Right ventricle myocardium inferior (tissue), 1 donor: ENCODE measurements at regions of chr1 and their contacts with region 1.

Region 1: DNA sequence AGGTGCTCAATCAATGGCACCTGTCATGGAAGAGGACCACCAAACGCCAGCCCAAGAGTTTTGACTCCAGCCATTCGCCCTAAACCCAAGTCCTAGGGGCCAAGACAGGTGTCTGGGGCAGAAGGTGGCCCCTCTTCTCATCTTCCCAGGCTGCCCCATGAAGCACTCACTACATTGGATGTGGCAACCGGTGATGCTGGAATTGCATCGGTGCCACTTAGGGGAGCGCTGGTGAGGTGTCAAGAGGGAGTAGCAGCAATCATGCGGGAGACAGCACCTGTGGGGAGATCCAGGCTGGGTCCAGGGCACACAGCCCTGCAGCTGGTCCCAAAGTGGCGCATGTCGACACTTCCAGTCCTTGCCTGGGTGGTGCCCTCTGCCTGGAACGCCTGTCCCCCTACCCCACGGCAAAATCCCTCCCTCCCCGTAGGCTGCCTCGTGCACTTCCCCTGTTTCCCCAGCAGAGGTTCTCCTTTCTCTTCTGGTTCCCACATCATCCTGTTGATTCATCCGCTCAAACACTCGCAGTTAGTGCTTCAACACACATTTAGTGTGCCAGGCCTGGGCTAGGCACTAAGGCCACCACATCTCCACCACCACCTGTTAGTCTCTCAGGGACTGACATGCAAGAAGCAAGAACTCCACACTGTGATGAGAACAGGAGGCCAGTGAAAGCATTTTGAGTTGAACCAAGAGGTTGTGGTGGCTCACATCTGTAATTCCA is 18.5 kb downstream of the PLA2G2D start:
- DNase-seq: no peak
- ATAC-seq: peak; percentile 80

Region 2: DNA sequence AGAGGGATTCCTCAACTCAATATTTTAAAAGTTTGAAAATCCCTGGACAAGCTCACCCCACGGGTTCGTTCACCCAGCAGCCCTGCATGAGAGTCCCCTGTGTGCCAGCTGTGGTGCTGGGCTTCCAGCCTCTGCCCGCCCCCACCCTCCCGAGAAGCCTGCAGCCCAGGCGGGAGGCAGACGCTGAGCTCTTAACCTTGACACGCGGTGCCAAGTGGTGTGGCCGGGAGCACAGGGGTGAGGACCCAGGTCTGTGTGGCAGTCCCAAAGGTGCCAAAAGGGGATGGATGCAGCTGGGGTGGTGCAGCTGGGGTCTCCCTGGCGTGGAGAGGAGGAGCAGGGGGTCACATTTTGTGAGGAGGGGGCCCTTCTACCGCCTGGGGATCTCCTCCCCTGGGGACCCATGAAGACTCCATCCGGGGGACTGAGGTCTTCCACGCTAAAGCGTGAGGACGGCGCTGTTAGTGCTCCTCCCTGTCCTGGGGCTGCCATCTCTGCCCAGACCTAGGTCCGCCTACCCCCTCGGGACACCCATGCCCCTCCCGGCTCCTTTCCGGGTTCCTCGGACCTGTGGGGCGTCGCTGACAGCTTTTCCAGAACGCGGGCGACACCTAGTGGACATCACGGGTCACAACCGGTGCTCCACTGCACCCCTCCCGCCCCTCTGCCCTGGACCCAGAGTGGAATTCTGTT is 51.3 kb after region 1 on chr1:
- intact Hi-C with region 1: loop called (anchors 1 kb)
- DNase-seq: peak; percentile 92
- ATAC-seq: peak; percentile 92

Region 3: DNA sequence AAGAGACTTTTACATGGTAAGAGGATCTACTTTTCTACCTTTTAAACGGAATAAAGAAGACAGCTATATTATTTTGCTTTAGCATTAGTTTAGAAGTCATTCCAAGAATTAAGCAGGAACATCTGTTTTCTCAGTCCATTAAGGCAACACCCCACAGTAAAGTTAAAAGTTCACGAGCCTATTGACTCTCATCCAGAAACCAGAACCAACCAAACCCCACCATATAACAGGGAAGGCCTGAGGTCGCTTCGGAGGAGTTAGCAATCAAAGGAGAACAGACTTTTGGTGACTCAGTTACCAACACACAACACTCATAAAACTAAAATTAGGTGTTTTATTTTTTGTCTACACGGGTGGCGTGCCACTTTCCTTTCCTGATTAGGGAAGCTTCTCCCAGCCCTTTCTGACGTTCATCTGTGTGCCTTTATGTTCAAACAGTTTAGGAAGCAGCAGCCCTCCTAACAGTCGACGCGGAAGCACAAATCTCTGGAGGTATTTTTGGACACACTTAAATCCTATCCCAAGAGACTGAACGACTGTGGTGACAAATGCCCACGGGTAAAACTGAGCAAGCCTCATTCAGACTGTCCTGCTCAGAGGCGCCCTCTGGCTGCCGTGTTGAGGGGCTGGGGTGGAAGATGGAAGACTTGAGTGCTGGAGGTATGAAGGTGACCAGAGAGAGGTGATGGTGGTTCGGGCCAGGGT is 94.1 kb after region 1 on chr1:
- intact Hi-C with region 1: loop called (anchors 5 kb)
- DNase-seq: peak; percentile 80
- ATAC-seq: peak; percentile 83